ENCODE measurements at regions of chr17 and their contacts with region 1.

Region 1: DNA sequence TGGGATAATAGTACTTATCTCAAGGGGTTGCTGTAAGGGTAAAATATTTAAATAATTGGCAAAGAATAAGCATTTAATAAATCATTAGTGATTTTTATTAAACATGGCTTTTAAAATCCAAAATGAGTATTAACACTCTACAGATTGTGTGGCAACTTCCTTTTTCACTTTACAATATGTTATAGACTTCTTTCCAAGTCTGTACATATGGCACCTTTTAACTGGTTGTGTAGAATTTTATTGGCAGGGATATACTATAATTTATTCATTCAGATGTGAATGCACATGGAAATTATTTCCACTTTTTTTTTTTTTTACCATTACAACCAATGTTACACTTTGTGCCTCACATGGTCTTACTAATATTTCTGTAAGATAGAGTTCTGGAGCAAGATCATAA is 15.7 kb upstream of the NLRP1 start:
- DNase-seq: no peak
- ATAC-seq: no peak
- H3K4me3 ChIP-seq: no peak overlapping the region
- H3K27ac ChIP-seq: no peak overlapping the region
- H3K4me1 ChIP-seq: no peaks in the 10 kb centered on the region
- H3K27me3 ChIP-seq: peaks cover 29% of the 10 kb centered on the region
- CTCF ChIP-seq: no peak
- POLR2A ChIP-seq: no peak
- RAD21 ChIP-seq: no peak

Region 2: GRCh38 chr17:5019475-5019956 is 580.5 kb before region 1 on chr17:
- CTCF ChIA-PET with region 1: no interaction called
- POLR2A ChIA-PET with region 1: no interaction called
- dilution Hi-C with region 1: no loop called
- in situ Hi-C with region 1: no loop called
- intact Hi-C with region 1: no loop called
- DNase-seq: peak; percentile 12
- ATAC-seq: peak; percentile 49; the same call in 1 of the 2 replicates
- H3K4me3 ChIP-seq: no peak overlapping the region
- H3K27ac ChIP-seq: no peak overlapping the region
- H3K4me1 ChIP-seq: no peaks in the 10 kb centered on the region
- H3K27me3 ChIP-seq: no peaks in the 10 kb centered on the region
- CTCF ChIP-seq: 0 out of 2 replicates have a peak, but pooled peaks have one; percentile 3
- POLR2A ChIP-seq: no peak
- RAD21 ChIP-seq: 0 out of 2 replicates have a peak, but pooled peaks have one; percentile 6

Region 3: GRCh38 chr17:5694551-5694950 is 94.5 kb after region 1 on chr17:
- CTCF ChIA-PET with region 1: no interaction called
- POLR2A ChIA-PET with region 1: no interaction called
- dilution Hi-C with region 1: no loop called
- in situ Hi-C with region 1: no loop called
- intact Hi-C with region 1: loop called (anchors 5 kb)
- DNase-seq: no peak
- ATAC-seq: no peak
- H3K4me3 ChIP-seq: no peak overlapping the region
- H3K27ac ChIP-seq: no peak overlapping the region
- H3K4me1 ChIP-seq: no peaks in the 10 kb centered on the region
- H3K27me3 ChIP-seq: peaks cover 2% of the 10 kb centered on the region; the same call in 1 of the 2 replicates
- CTCF ChIP-seq: no peak
- POLR2A ChIP-seq: no peak
- RAD21 ChIP-seq: no peak